Activated CD8-positive, alpha-beta T cell treated with anti-CD3 and anti-CD28 coated beads for 36 hours (primary cell): ENCODE measurements at regions of chr10 and their contacts with region 1.

Region 1: DNA sequence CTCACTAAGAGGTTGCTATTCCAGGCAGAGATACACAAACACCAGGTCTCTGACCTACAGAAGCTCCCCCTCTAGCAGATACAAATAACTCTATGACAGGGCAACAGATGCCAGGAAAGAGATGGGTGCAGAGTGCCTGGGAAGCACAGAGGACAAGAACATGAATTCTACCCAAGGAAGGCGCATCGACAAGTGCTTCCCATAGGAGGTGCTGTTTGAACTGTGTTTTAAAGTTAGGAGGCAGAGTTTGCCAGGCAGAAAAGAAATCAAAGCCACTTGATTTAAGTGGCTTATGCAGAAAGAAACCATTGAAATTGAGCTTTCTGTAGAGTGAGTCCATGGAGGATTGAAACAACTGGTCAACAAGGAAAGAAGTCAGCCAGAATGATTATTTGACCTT is 35.3 kb upstream of the EGR2 start:
- DNase-seq: peak; percentile 48
- ATAC-seq: no peak
- H3K4me3 Mint-ChIP-seq: no peak overlapping the region
- H3K27ac Mint-ChIP-seq: no peak overlapping the region
- H3K4me1 Mint-ChIP-seq: peaks cover 56% of the 10 kb centered on the region
- H3K27me3 Mint-ChIP-seq: peaks cover 11% of the 10 kb centered on the region
- CTCF ChIP-seq: peak; percentile 63

Region 2: DNA sequence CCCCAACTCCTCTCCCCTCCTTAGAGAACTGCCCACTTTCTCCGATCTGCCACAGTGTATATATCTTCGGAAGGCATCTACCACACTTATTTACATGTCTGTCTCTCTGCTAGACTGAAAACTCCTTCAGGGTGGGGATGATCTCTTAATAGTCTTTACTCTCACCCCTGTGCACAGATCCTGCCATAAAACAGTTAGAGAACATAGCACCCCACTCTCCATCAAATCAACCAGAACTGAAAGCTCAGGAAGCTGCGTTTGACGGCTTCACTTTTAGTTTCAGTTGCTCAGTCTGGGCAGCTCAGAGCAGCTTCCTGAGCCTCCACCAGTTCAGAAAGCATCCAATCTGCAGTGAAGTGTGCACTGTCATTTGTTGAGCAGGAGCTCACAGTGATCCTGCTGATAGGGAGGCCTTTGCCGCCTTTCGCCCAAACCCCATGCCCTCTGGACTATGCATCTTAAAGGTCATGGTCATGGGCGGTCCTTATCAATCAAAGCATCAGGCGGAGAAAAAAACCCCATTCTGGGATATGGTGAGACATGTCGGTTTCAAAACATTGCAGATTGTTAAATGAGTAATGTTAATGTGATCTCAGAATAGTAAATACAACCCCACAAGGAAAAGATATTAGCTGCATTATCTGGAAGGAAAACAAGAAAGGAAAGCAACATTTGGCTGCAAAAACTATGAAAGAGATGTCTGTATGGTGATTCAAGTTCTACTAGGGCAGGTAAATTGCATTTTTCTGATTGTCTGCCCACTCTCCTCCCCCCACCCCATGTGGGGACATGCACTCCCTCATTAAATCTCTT is 214.0 kb before region 1 on chr10:
- CTCF ChIA-PET with region 1: no interaction called
- POLR2A ChIA-PET with region 1: no interaction called
- intact Hi-C with region 1: loop called (anchors 1 kb)
- DNase-seq: peak; percentile 90
- ATAC-seq: peak; percentile 93
- H3K4me3 Mint-ChIP-seq: no peak overlapping the region
- H3K27ac Mint-ChIP-seq: no peak overlapping the region
- H3K4me1 Mint-ChIP-seq: peaks cover 25% of the 10 kb centered on the region
- H3K27me3 Mint-ChIP-seq: no peaks in the 10 kb centered on the region
- CTCF ChIP-seq: no peak

Region 3: GRCh38 chr10:62811159-62811875 is 40.1 kb before region 1 on chr10:
- CTCF ChIA-PET with region 1: interaction called, 30 read pairs
- POLR2A ChIA-PET with region 1: interaction called, 33 read pairs
- intact Hi-C with region 1: loop called (anchors 2 kb)
- DNase-seq: peak; percentile 96
- ATAC-seq: peak; percentile 47
- H3K4me3 Mint-ChIP-seq: peak overlapping the region; percentile 97
- H3K27ac Mint-ChIP-seq: peak overlapping the region; percentile 67
- H3K4me1 Mint-ChIP-seq: peaks cover 73% of the 10 kb centered on the region
- H3K27me3 Mint-ChIP-seq: no peaks in the 10 kb centered on the region
- CTCF ChIP-seq: no peak

Region 4: DNA sequence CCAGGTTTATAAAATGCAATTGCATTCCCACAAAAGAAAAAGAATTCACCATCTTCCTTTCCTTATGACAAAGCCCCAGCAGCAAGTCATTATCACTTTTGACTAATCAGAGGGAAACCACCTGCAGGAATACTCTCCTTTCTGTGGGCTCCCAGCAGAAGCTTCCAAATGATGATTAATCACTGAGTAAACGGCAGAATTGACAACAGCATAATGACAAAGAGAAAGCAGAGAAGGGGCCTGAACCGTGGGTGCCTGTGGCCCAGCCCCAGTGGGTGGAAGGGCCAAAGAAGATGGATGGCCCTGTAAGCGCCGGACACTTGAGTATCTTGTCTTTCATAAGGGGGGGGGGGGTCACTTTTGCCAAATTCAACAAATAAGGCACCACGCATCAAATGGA is 129.2 kb after region 1 on chr10:
- CTCF ChIA-PET with region 1: no interaction called
- POLR2A ChIA-PET with region 1: no interaction called
- intact Hi-C with region 1: loop called (anchors 1 kb)
- DNase-seq: peak; percentile 40
- ATAC-seq: peak; percentile 76
- H3K4me3 Mint-ChIP-seq: no peak overlapping the region
- H3K27ac Mint-ChIP-seq: peak overlapping the region; percentile 78
- H3K4me1 Mint-ChIP-seq: peaks cover 29% of the 10 kb centered on the region
- H3K27me3 Mint-ChIP-seq: peaks cover 17% of the 10 kb centered on the region
- CTCF ChIP-seq: no peak

Region 5: GRCh38 chr10:62992145-62992721 is 140.8 kb after region 1 on chr10:
- CTCF ChIA-PET with region 1: interaction called, 3 read pairs
- POLR2A ChIA-PET with region 1: interaction called, 4 read pairs
- intact Hi-C with region 1: loop called (anchors 2 kb)
- DNase-seq: peak; percentile 7
- ATAC-seq: peak; percentile 23
- H3K4me3 Mint-ChIP-seq: peak overlapping the region; percentile 54
- H3K27ac Mint-ChIP-seq: peak overlapping the region; percentile 95
- H3K4me1 Mint-ChIP-seq: peaks cover 61% of the 10 kb centered on the region
- H3K27me3 Mint-ChIP-seq: peaks cover 4% of the 10 kb centered on the region
- CTCF ChIP-seq: no peak